Psoas muscle (tissue), 8 donors: ENCODE measurements at regions of chr9 and their contacts with region 1.

Region 1: GRCh38 chr9:121992571-121993212 is 100.4 kb downstream of the TTLL11 start:
- DNase-seq: peak; percentile 43 to 79
- ATAC-seq: peak; percentile 75 to 91 (median 81)
- H3K4me3 ChIP-seq: no peak overlapping the region
- H3K27ac ChIP-seq: no peak overlapping the region
- H3K4me1 ChIP-seq: peaks cover 43% of the 10 kb centered on the region
- H3K27me3 ChIP-seq: no peaks in the 10 kb centered on the region
- CTCF ChIP-seq: peak; percentile 85

Region 2: GRCh38 chr9:121545875-121546423 is 446.7 kb before region 1 on chr9:
- intact Hi-C with region 1: loop called (anchors 1 to 5 kb)
- DNase-seq: peak; percentile 97
- ATAC-seq: peak; percentile 89 to 94 (median 92)
- H3K4me3 ChIP-seq: peak overlapping the region; percentile 52
- H3K27ac ChIP-seq: no peak overlapping the region
- H3K4me1 ChIP-seq: peaks cover 10% of the 10 kb centered on the region
- H3K27me3 ChIP-seq: no peaks in the 10 kb centered on the region
- CTCF ChIP-seq: peak; percentile 97

Region 3: DNA sequence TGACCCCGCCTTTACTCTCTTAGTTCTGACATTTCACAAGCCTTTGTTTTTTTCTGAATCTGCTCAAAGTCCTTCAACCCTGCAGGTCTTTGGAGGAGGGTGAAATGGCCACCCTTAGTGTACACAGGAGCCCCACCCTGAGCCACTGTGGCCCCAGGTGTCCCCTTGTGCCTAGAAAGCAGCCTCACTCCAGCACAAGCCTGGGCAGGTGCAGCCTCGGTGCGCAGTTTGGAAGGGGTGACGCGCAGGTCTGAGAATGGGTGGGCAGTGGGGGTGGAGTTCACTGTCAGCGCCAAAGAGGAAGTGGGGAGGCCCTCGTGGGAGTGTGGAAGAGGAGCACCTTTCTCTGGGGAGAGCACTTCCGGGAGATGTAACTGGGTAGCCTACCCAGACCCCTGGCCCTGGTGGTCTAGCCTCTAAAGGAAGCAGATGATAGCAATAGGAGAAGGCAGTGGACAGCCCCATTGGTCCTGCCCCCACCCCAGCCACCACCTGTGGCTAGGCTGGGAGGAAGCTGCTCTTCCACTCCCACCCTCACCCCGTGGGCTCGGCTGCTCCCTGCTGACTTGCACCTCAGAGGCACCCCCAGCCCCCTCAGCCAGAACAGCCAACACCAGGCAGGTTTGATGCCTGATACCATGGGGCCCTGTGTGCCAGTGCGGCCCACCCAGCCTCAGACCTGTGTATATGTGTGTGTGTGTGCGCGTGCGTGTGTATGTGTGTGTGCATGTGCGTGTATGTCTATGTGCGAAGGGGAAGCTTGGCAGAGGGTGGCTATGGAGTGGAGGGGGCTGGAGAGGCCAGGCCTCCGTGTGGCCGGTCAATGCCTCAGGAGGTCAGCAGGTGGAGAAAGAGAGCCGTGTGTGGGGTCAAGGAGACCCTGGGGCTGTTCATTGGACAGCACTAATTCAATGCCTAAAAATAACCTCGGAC is 358.1 kb before region 1 on chr9:
- intact Hi-C with region 1: loop called in 1 of 2 experiments (anchors 5 kb)
- DNase-seq: no peak
- ATAC-seq: peak; percentile 39 to 49 (median 44)
- H3K4me3 ChIP-seq: no peak overlapping the region
- H3K27ac ChIP-seq: no peak overlapping the region
- H3K4me1 ChIP-seq: peaks cover 62% of the 10 kb centered on the region
- H3K27me3 ChIP-seq: no peaks in the 10 kb centered on the region
- CTCF ChIP-seq: peak; percentile 47

Region 4: GRCh38 chr9:121686930-121687541 is 305.7 kb before region 1 on chr9:
- intact Hi-C with region 1: loop called in 1 of 2 experiments (anchors 5 kb)
- DNase-seq: peak; percentile 81 to 88
- ATAC-seq: peak; percentile 76 to 89 (median 80)
- H3K4me3 ChIP-seq: no peak overlapping the region
- H3K27ac ChIP-seq: peak overlapping the region; percentile 47
- H3K4me1 ChIP-seq: peaks cover 16% of the 10 kb centered on the region
- H3K27me3 ChIP-seq: no peaks in the 10 kb centered on the region
- CTCF ChIP-seq: peak; percentile 79

Region 5: GRCh38 chr9:121698627-121699570 is 293.8 kb before region 1 on chr9:
- intact Hi-C with region 1: loop called in 1 of 2 experiments (anchors 5 kb)
- DNase-seq: peak; percentile 68 to 79
- ATAC-seq: no peak
- H3K4me3 ChIP-seq: peak overlapping the region; percentile 66
- H3K27ac ChIP-seq: peak overlapping the region; percentile 79
- H3K4me1 ChIP-seq: peaks cover 28% of the 10 kb centered on the region
- H3K27me3 ChIP-seq: no peaks in the 10 kb centered on the region
- CTCF ChIP-seq: no peak

Region 6: GRCh38 chr9:121744002-121744686 is 248.5 kb before region 1 on chr9:
- intact Hi-C with region 1: loop called in 1 of 2 experiments (anchors 5 kb)
- DNase-seq: peak; percentile 65 to 74
- ATAC-seq: peak; percentile 60 to 78 (median 68)
- H3K4me3 ChIP-seq: peak overlapping the region; percentile 62
- H3K27ac ChIP-seq: peak overlapping the region; percentile 87
- H3K4me1 ChIP-seq: peaks cover 89% of the 10 kb centered on the region
- H3K27me3 ChIP-seq: no peaks in the 10 kb centered on the region
- CTCF ChIP-seq: peak; percentile 60

Region 7: DNA sequence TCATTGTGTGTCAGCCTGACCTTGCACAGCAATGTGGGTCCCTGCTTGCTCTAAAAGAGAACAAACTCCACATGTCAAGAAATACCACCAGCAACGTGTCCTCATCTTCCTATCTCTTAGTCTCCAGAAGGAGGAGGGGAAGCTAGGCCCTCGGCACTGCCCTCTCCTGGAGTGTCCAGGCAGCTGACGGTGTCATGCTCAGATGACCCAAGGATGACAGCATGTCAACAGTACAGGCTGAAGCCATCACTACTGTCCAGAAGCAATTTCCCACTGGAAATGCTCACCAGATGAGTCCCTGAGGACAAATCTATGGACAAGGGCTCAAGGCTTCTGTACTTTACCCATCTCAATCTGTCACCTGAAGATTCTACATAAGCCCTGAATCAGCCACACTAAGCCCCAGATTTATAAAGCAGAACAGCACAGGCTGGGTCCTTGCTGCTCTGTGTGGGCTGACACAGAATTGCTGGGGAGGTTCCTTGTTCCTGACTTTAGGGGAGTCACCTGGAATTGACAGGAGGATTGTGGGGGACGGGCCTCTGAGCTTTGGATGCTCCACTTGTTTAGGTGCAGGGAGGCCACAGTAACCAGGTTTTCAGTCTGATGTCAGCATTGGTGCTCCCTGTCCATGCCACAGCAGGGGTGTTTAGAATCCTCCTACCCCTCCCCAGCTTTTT is 131.1 kb before region 1 on chr9:
- intact Hi-C with region 1: loop called in 1 of 2 experiments (anchors 10 kb)
- DNase-seq: peak; percentile 57 to 76
- ATAC-seq: peak; percentile 87 to 95 (median 92)
- H3K4me3 ChIP-seq: no peak overlapping the region
- H3K27ac ChIP-seq: no peak overlapping the region
- H3K4me1 ChIP-seq: peaks cover 5% of the 10 kb centered on the region
- H3K27me3 ChIP-seq: no peaks in the 10 kb centered on the region
- CTCF ChIP-seq: peak; percentile 50

Region 8: GRCh38 chr9:122029898-122030297 is 37.2 kb after region 1 on chr9:
- intact Hi-C with region 1: no loop called
- DNase-seq: no peak
- ATAC-seq: peak; percentile 21 to 68 (median 43)
- H3K4me3 ChIP-seq: no peak overlapping the region
- H3K27ac ChIP-seq: peak overlapping the region; percentile 1
- H3K4me1 ChIP-seq: peaks cover 3% of the 10 kb centered on the region
- H3K27me3 ChIP-seq: no peaks in the 10 kb centered on the region
- CTCF ChIP-seq: no peak

Region 9: GRCh38 chr9:122107291-122107805 is 114.7 kb after region 1 on chr9:
- intact Hi-C with region 1: no loop called
- DNase-seq: no peak
- ATAC-seq: peak in 2 of 4 donors; percentile 56
- H3K4me3 ChIP-seq: no peak overlapping the region
- H3K27ac ChIP-seq: no peak overlapping the region
- H3K4me1 ChIP-seq: no peaks in the 10 kb centered on the region
- H3K27me3 ChIP-seq: no peaks in the 10 kb centered on the region
- CTCF ChIP-seq: no peak

Region 10: GRCh38 chr9:122126331-122127261 is 133.9 kb after region 1 on chr9:
- intact Hi-C with region 1: no loop called
- DNase-seq: no peak
- ATAC-seq: no peak
- H3K4me3 ChIP-seq: peak overlapping the region; percentile 47
- H3K27ac ChIP-seq: no peak overlapping the region
- H3K4me1 ChIP-seq: peaks cover 11% of the 10 kb centered on the region
- H3K27me3 ChIP-seq: peaks cover 0 to 13% (median 0%) of the 10 kb centered on the region in 3 donors
- CTCF ChIP-seq: no peak